ENCODE measurements at regions of chr22 and their contacts with region 1.

Region 1: DNA sequence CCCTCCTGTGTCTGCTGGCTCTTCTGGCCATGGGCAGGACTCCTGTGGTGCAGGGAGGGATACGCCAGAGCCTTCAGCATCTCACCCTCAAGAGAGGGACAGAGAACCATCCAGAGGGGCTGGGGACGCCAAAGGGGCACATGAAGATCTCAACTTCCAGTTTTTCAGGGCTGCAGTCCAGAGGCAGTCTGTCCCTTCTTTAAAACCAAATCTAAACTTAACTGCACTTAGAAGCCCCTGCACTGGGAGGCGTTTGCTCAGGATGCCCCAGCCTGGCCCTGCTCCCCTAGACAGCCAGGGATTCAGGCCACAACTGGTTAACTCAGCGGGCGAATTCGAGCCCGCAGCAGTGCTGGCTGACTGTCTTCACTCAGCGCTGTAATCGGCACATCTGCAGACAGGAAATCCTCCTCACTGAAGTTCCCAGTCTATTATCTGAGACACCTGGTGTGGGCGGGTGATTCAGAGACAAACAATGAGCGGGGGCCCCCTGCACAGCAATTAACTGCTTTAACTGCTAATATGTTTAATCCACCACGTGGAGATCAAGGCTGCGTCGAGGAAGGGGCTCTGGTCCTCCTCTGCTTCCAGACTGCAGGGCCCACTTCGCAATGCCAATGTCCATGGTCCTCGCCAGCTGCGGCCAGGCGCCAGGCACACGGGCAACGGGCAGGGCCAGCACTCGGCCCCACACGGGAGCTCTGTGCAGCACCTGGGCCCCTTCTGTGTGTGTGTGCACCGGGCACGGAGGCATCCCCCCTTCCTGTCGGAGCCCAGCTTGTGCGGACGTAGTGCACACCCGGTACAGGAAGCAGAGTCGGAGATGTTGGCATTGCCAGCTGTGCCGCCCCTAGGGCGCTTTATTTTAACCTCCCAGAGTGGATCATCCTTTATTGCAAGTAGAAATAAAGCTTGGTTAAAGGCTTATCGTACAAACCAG is 36.9 kb upstream of the GNB1L start:
- DNase-seq: peak; percentile 81 to 98 (median 94)
- H3K4me3 ChIP-seq: peak overlapping the region in 4 of 7 experiments; percentile 38 to 58 (median 40)
- H3K27ac ChIP-seq: peak overlapping the region in 1 of 2 experiments; percentile 57
- H3K4me1 ChIP-seq: peaks cover 9 to 57% (median 53%) of the 10 kb centered on the region in 4 experiments
- H3K27me3 ChIP-seq: no peaks in the 10 kb centered on the region

Region 2: GRCh38 chr22:19854778-19855503 is 36.6 kb before region 1 on chr22 and contains the starts of genes GNB1L and RTL10:
- CTCF ChIA-PET with region 1: interaction called, 9 read pairs
- POLR2A ChIA-PET with region 1: interaction called, 10 read pairs
- DNase-seq: peak; percentile 94 to 96 (median 95)
- H3K4me3 ChIP-seq: peak within 1 kb of the TSS; percentile 86 to 97 (median 92)
- H3K27ac ChIP-seq: peak within 1 kb of the TSS; percentile 72 to 92
- H3K4me1 ChIP-seq: peaks cover 0 to 36% (median 31%) of the 10 kb centered on the region in 4 experiments
- H3K27me3 ChIP-seq: no peaks in the 10 kb centered on the region

Region 3: DNA sequence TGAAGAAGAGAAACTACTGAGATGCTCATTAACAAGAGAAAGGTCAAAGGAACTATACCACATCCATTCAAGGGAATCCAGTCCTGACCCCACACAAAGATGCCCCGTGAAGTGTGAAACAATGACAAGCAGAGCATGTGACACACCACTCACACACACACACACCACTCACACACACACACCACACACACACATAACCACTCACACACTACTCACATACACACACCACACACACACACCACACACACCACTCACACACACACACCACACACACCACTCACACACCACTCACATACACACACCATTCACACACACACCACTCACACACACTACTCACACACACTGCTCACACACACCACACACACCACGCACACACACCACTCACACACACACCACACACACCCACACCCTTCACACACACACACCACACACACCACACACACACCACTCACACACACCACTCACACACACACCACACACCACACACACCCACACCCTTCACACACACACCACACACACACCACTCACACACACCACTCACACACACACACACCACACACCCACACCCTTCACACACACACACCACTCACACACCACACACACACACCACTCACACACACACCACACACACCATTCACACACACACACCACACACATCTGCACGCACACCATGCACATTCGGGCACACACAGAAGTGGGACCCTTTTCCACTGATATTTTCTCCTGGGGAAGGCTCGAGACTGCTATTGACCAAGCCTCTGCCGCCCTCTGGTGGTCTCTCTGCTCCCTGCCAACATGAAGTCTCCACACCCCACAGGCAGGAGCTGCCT is 18.0 kb after region 1 on chr22:
- CTCF ChIA-PET with region 1: interaction called, 13 read pairs
- POLR2A ChIA-PET with region 1: no interaction called
- DNase-seq: peak; percentile 75 to 86 (median 81)
- H3K4me3 ChIP-seq: no peak overlapping the region
- H3K27ac ChIP-seq: no peak overlapping the region
- H3K4me1 ChIP-seq: peaks cover 0 to 4% (median under 1%) of the 10 kb centered on the region in 4 experiments
- H3K27me3 ChIP-seq: no peaks in the 10 kb centered on the region

Measured in common myeloid progenitor, CD34-positive (primary cell).